ENCODE measurements at regions of chr2 and their contacts with region 1.

Region 1: DNA sequence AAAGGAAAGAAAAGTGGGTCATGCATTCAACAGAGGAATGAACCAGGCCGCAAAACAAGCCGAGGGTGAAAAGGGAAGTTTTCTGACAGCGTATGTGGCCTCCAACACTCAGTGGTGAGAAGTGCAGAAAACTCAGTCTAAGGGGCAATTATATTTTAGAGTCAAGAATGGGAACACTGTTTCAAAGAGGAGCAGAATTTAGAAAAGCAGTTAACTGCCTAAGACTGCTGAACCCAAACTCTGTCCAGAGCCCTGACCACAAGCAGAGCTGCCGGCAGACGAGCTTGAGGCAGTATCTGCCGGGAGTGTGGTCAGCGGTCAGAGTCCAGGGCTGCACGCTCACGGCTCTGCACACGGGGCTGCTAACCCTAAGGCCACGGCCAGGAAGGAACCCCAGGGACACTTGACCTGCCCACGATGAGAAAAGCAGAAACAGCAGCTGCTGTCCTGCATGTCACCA is 347.0 kb upstream of the ID2 start:
- DNase-seq: no peak
- H3K4me3 Mint-ChIP-seq: no peak overlapping the region
- H3K27ac Mint-ChIP-seq: no peak overlapping the region
- H3K4me1 Mint-ChIP-seq: peaks cover 20% of the 10 kb centered on the region
- H3K27me3 Mint-ChIP-seq: no peaks in the 10 kb centered on the region

Region 2: GRCh38 chr2:7427293-7428060 is 907.4 kb before region 1 on chr2:
- CTCF ChIA-PET with region 1: no interaction called
- POLR2A ChIA-PET with region 1: no interaction called
- intact Hi-C with region 1: loop called (anchors 10 kb)
- DNase-seq: no peak
- H3K4me3 Mint-ChIP-seq: peak overlapping the region; percentile 35
- H3K27ac Mint-ChIP-seq: peak overlapping the region; percentile 68
- H3K4me1 Mint-ChIP-seq: peaks cover 38% of the 10 kb centered on the region
- H3K27me3 Mint-ChIP-seq: peaks cover 14% of the 10 kb centered on the region

Region 3: DNA sequence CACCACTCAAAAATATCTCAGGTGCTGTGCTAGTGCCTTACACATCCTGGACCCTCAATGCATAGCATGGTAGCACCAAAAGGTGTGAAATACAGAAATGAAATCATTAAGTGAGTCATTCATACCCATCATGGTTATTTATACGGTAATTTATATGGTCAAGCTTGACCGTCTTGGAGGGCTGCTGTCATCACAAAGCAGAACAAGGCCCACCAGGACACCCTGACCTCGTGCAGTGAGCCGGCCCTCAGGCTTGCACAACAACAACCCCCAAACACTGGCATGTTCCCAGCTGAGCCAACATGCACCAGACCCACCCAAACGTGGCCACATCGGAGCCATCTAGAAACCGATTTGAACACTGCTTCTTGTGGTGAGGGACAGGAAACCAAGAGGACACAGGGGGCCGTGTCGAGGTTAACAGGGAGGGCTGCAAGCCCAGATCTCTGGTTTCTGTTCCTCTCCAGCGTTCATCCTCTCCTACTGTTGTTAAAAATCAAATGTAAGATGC is 31.5 kb before region 1 on chr2:
- CTCF ChIA-PET with region 1: no interaction called
- POLR2A ChIA-PET with region 1: interaction called, 6 read pairs
- intact Hi-C with region 1: loop called (anchors 2 kb)
- DNase-seq: peak; percentile 81
- H3K4me3 Mint-ChIP-seq: no peak overlapping the region
- H3K27ac Mint-ChIP-seq: peak overlapping the region; percentile 16
- H3K4me1 Mint-ChIP-seq: peaks cover 62% of the 10 kb centered on the region
- H3K27me3 Mint-ChIP-seq: peaks cover 6% of the 10 kb centered on the region

Region 4: DNA sequence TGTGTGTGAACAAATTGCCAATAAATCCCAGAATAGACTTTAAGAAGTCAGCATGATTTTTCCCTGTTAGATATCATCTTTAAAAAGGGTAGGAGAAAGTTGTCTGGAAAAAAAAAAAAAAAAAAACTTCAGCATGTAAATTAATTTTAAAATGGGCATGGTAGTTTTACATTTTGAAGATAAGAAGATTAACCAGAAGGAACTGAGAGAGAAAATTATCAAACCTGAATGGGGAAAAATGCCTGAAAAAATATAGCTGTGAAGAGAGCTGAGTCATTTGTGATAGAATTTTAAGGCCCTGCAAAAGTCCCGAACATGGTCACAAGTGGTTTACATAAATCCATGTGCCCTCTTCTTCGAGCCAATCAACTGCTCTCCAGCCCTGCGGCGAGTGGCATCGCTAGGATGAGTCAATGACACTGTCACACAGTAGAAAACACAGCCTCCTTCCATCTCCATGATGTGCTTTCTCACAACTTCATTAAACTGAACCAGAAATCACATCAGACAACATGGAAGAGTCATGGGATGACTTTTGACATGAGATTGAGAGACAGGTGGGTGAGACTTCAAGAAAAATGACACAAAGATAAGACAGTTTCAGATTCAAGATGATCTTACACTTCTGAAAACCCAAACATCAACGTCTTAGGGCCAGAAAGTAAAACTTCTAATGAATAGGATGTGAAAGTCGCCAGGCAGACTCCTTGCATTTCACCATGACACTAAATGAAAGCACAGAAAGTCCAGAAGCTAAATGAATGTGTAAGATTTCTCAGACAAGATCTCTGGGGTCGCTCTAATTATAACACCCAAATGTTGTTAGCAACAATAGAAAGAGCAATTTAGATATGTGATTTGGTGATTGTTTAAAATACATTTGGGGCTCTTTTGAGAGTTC is 73.9 kb after region 1 on chr2:
- CTCF ChIA-PET with region 1: no interaction called
- POLR2A ChIA-PET with region 1: no interaction called
- intact Hi-C with region 1: loop called (anchors 1 kb)
- DNase-seq: peak; percentile 91
- H3K4me3 Mint-ChIP-seq: peak overlapping the region; percentile 0
- H3K27ac Mint-ChIP-seq: peak overlapping the region; percentile 79
- H3K4me1 Mint-ChIP-seq: peaks cover 34% of the 10 kb centered on the region
- H3K27me3 Mint-ChIP-seq: no peaks in the 10 kb centered on the region

Region 5: GRCh38 chr2:8488001-8488738 is 153.3 kb after region 1 on chr2:
- CTCF ChIA-PET with region 1: no interaction called
- POLR2A ChIA-PET with region 1: interaction called, 3 read pairs
- intact Hi-C with region 1: loop called (anchors 1 kb)
- DNase-seq: peak; percentile 88
- H3K4me3 Mint-ChIP-seq: peak overlapping the region; percentile 77
- H3K27ac Mint-ChIP-seq: peak overlapping the region; percentile 91
- H3K4me1 Mint-ChIP-seq: peaks cover 72% of the 10 kb centered on the region
- H3K27me3 Mint-ChIP-seq: no peaks in the 10 kb centered on the region

Measured in activated CD4-positive, alpha-beta memory T cell treated with anti-CD3 and anti-CD28 coated beads for 36 hours (primary cell).